ENCODE measurements at regions of chr19 and their contacts with region 1.

Region 1: GRCh38 chr19:10251792-10252694 is at the start of gene MRPL4:
- DNase-seq: peak; percentile 97
- H3K4me3 Mint-ChIP-seq: peak within 1 kb of the TSS; percentile 84
- H3K27ac Mint-ChIP-seq: peak within 1 kb of the TSS; percentile 85
- H3K4me1 Mint-ChIP-seq: peaks cover 36% of the 10 kb centered on the region
- H3K27me3 Mint-ChIP-seq: no peaks in the 10 kb centered on the region
- total RNA-seq, gene MRPL4: 55.4 to 58.6 TPM

Region 2: DNA sequence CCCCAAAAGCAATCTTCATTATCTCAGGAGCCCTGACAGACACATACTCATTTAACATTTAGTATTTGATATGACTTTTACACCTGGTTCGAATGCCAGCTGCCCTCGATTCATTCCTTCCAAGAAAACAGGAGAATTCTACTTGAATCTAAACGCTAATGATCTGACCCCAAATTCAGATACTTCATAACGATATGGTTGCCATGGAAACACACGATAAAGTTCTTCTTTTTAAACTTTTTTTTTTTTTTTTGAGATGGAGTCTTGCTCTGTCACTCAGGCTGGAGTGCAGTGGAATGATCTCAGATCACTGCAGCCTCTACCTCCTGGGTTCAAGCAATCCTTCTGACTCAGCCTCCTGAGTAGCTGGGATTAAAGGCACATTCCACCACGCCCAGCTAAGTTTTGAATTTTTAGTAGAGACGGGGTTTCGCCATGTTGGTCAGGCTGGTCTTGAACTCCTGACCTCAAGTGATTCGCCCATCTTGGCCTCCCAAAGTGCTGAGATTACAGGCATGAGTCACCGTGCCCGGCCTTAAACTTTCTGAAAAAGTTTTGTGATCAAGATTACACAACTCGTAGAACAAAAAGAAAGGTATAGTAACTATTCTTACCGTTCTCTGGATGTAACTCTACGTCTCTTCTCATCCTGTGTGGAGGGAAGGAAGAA is 78.7 kb before region 1 on chr19:
- CTCF ChIA-PET with region 1: interaction called, 11 read pairs
- POLR2A ChIA-PET with region 1: interaction called, 3 read pairs
- DNase-seq: no peak
- H3K4me3 Mint-ChIP-seq: no peak overlapping the region
- H3K27ac Mint-ChIP-seq: peak overlapping the region; percentile 28
- H3K4me1 Mint-ChIP-seq: peaks cover 16% of the 10 kb centered on the region
- H3K27me3 Mint-ChIP-seq: no peaks in the 10 kb centered on the region

Region 3: DNA sequence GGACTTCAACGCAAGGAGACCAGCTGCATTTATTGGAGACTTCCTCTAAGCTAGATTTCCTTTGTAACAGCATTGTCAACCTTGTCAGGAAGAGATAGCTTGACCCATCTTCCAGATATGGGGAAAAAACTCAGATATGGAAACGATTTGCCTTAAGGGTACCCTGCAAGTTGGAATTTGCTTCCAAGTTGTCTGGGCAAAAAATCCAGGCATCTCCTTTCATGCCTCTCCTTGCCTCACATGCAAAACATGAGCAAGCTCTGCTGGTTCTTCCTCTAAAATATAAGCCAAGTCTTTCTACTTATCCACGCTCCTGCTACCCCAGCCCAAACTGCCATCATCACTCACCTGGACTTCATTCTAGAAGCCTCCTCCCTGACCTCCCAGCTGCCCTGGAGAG is 50.9 kb before region 1 on chr19:
- CTCF ChIA-PET with region 1: interaction called, 24 read pairs
- POLR2A ChIA-PET with region 1: interaction called, 4 read pairs
- DNase-seq: no peak
- H3K4me3 Mint-ChIP-seq: no peak overlapping the region
- H3K27ac Mint-ChIP-seq: no peak overlapping the region
- H3K4me1 Mint-ChIP-seq: peaks cover 15% of the 10 kb centered on the region
- H3K27me3 Mint-ChIP-seq: no peaks in the 10 kb centered on the region

Region 4: GRCh38 chr19:10230861-10231611 is 21.0 kb before region 1 on chr19 and contains the start of gene S1PR2:
- CTCF ChIA-PET with region 1: interaction called, 51 read pairs
- POLR2A ChIA-PET with region 1: interaction called, 8 read pairs
- DNase-seq: peak; percentile 71
- H3K4me3 Mint-ChIP-seq: peak within 1 kb of the TSS; percentile 86
- H3K27ac Mint-ChIP-seq: peak within 1 kb of the TSS; percentile 52
- H3K4me1 Mint-ChIP-seq: peaks cover 24% of the 10 kb centered on the region
- H3K27me3 Mint-ChIP-seq: no peaks in the 10 kb centered on the region
- total RNA-seq, gene S1PR2: 9.5 to 10.6 TPM